ENCODE measurements at regions of chr19 and their contacts with region 1.

Region 1: GRCh38 chr19:19606021-19606420 is 12.5 kb downstream of the PBX4 start:
- DNase-seq: peak; percentile 47
- H3K4me3 Mint-ChIP-seq: peak overlapping the region; percentile 39
- H3K27ac Mint-ChIP-seq: peak overlapping the region; percentile 76
- H3K4me1 Mint-ChIP-seq: peaks cover 26% of the 10 kb centered on the region
- H3K27me3 Mint-ChIP-seq: no peaks in the 10 kb centered on the region
- CTCF ChIP-seq: no peak

Region 2: DNA sequence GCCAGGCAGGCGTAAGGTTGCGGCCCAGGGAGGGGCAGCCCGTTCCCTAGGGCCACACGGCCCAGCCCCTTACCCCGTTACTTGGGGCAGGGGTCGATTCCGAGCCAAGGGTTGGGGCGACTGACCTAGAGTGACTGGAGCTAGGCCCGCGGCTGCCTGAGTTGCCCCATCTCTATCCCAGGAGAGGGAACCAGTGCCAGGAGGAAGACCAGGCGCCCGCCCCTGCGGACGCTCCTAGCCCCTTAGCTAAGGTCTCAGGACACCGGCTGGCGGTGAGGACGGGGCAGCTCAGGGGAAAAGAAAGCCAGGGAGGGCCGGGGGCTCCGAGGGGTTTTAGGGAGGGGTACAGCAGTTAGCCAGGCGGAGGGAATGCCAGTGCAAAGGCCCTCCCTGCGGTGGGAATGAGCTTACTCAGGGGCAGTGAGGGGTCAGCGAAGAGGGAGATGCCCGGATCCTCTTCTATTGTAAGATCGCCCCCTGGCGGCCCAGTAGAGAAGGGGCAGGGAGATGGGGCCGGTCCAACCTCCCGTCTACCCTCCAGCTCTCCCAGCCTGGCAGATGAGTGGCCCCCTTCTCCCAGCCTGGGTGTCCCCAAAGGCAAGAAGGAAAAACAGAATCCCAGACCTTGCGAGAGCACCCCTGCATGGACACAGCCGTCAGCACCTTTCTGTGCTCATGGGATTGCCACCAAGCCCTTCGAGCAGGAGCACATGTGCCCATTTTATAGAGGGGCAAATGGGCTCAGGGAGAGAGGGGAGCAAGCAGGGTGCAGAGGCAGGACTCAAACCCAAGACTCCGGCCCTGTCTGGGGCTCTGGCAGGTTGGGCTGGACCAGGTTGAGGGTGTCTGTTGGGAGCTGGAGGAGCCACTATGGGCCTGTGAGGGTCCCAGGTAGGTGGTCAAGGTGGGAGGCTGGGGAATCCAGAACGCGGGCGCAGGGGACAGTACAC is 51.7 kb before region 1 on chr19:
- CTCF ChIA-PET with region 1: no interaction called
- intact Hi-C with region 1: loop called (anchors 10 kb)
- DNase-seq: peak; percentile 48
- H3K4me3 Mint-ChIP-seq: no peak overlapping the region
- H3K27ac Mint-ChIP-seq: no peak overlapping the region
- H3K4me1 Mint-ChIP-seq: no peaks in the 10 kb centered on the region
- H3K27me3 Mint-ChIP-seq: peaks cover 4% of the 10 kb centered on the region
- CTCF ChIP-seq: no peak

Region 3: GRCh38 chr19:19627621-19628500 is 21.8 kb after region 1 on chr19 and contains the start of gene LPAR2:
- CTCF ChIA-PET with region 1: no interaction called
- intact Hi-C with region 1: no loop called
- DNase-seq: peak; percentile 76
- H3K4me3 Mint-ChIP-seq: peak within 1 kb of the TSS; percentile 83
- H3K27ac Mint-ChIP-seq: peak within 1 kb of the TSS; percentile 91
- H3K4me1 Mint-ChIP-seq: peaks cover 11% of the 10 kb centered on the region
- H3K27me3 Mint-ChIP-seq: no peaks in the 10 kb centered on the region
- CTCF ChIP-seq: no peak
- total RNA-seq, gene LPAR2: 25.0 and 27.3 TPM in 2 replicates